ENCODE measurements at regions of chr5 and their contacts with region 1.

Region 1: DNA sequence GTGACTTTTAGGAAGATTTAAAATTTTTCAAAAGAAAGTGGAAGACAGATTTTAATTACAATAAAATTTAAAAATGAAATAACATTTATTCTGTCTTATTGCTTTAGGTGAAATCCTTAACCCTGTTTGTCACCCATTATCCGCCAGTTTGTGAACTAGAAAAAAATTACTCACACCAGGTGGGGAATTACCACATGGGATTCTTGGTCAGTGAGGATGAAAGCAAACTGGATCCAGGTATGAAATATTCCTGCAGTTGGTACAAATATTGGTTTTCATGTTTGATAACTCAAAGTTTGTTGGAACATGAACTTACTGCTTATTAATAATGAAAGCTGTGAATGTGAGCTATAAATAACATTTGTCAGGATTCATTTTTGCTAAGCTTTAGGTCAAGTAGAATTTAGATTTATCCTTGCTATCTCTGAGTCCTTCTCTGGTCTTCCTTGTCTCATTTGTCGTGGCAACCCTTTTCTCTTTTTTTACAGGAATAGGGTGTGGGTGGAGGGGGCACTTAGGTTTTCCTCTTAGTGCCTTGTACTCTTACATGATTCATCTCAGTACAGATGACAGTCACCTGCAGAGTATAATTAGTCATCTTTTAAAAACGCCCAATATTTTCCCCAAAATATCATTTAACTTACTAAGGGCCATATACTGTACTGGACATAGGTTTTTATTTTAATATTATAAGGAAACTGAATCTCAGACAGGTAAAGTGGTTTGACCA is 95.3 kb upstream of the RASGRF2 start:
- DNase-seq: no peak
- H3K4me3 Mint-ChIP-seq: peak overlapping the region; percentile 27
- H3K27ac Mint-ChIP-seq: peak overlapping the region; percentile 34
- H3K4me1 Mint-ChIP-seq: peaks cover 60% of the 10 kb centered on the region
- H3K27me3 Mint-ChIP-seq: no peaks in the 10 kb centered on the region

Region 2: GRCh38 chr5:80793354-80793753 is 71.5 kb before region 1 on chr5:
- intact Hi-C with region 1: loop called (anchors 1 kb)
- DNase-seq: no peak
- H3K4me3 Mint-ChIP-seq: no peak overlapping the region
- H3K27ac Mint-ChIP-seq: no peak overlapping the region
- H3K4me1 Mint-ChIP-seq: peaks cover 11% of the 10 kb centered on the region
- H3K27me3 Mint-ChIP-seq: no peaks in the 10 kb centered on the region

Region 3: DNA sequence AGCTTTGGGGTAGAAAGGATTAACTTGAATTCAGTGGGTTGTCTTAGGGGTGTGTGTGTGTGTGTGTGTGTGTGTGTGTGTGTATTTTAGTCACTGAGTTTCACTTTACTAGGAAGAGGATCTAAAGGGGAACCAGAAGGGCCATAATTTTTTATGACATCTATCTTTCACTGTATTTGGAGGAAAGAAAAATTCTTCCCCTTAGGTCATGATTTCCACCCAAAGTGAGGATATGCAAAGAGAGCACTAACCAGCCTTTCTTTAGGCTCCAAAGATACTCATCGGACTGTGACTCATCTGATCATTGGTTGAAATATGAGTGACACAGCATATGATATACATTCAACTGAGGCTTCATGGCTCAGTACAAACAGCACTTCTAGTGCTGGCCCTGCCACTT is 20.1 kb after region 1 on chr5:
- intact Hi-C with region 1: loop called (anchors 2 kb)
- DNase-seq: no peak
- H3K4me3 Mint-ChIP-seq: no peak overlapping the region
- H3K27ac Mint-ChIP-seq: peak overlapping the region; percentile 67
- H3K4me1 Mint-ChIP-seq: peaks cover 16% of the 10 kb centered on the region
- H3K27me3 Mint-ChIP-seq: no peaks in the 10 kb centered on the region

Region 4: GRCh38 chr5:80955082-80955481 is 90.2 kb after region 1 on chr5:
- intact Hi-C with region 1: no loop called
- DNase-seq: no peak
- H3K4me3 Mint-ChIP-seq: no peak overlapping the region
- H3K27ac Mint-ChIP-seq: no peak overlapping the region
- H3K4me1 Mint-ChIP-seq: peaks cover 19% of the 10 kb centered on the region
- H3K27me3 Mint-ChIP-seq: peaks cover 6% of the 10 kb centered on the region

Region 5: DNA sequence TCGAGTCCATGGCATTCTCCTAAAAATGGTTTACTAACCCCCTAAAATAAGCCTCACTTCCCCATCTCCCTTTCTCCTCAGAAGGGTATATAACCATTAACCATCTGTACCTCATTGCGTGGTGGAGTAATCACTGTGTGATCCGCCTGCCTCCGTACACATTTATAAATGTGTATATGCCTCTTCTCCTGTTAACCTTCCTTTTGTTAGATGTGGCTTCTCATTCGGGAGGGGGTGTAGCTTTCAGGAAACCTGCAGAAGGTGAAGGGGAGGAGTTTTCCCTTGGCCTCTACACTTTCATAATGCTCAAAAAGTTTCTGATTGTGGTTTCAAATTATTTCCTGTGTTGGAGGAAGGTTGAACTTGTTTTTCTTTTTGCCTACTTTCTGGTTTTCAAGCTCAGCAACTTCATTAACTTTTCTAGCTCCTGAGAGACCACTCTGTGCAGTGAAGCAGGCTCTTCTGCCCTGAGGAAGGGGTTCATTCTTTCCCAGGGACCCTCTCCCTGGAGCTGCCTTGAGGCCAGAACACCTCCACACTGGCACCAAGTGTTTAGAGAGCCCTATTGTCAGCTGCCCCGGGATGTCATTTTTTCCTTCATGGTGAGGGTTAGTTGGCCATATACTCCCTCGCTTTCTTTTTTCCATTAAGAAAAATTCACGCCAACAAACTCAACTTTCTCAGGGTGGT is 142.2 kb after region 1 on chr5:
- intact Hi-C with region 1: loop called (anchors 1 kb)
- DNase-seq: peak; percentile 40
- H3K4me3 Mint-ChIP-seq: peak overlapping the region; percentile 73
- H3K27ac Mint-ChIP-seq: peak overlapping the region; percentile 90
- H3K4me1 Mint-ChIP-seq: peaks cover 46% of the 10 kb centered on the region
- H3K27me3 Mint-ChIP-seq: no peaks in the 10 kb centered on the region

Region 6: GRCh38 chr5:81086881-81087281 is 222.0 kb after region 1 on chr5:
- intact Hi-C with region 1: no loop called
- DNase-seq: no peak
- H3K4me3 Mint-ChIP-seq: no peak overlapping the region
- H3K27ac Mint-ChIP-seq: no peak overlapping the region
- H3K4me1 Mint-ChIP-seq: no peaks in the 10 kb centered on the region
- H3K27me3 Mint-ChIP-seq: no peaks in the 10 kb centered on the region

Measured in activated T-helper 2 cell treated with anti-CD3 and anti-CD28 coated beads, Interferon-gamma antibody, Interleukin-2, Interleukin-4, amounts not matched to agents 10 μg/mL and 5 μg/mL and 100 μg/mL, durations not matched to agents 14 hours and 24 hours and 36 hours (primary cell).